Posterior vena cava (tissue), 2 donors: ENCODE measurements at regions of chr1 and their contacts with region 1.

Region 1: DNA sequence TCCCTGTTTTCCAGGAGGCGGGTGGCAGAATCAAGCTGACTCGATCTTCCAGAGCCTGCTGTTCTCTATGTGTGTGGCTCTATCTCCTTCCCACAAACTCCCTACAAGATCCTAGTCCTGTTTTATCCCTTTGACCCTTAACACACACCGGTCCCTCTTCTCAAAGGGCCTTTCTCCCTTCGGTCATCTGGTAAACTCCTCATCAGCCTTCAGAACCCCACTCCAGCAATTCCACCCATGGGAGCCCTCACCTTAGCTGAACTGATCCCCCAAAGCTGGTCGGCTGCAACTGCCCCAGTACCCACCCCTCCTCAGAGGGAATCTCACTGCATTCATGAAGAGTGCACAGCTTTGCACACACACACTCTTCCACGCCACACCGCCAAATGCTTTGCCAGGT is 184.9 kb downstream of the IGSF21 start:
- DNase-seq: no peak

Region 2: DNA sequence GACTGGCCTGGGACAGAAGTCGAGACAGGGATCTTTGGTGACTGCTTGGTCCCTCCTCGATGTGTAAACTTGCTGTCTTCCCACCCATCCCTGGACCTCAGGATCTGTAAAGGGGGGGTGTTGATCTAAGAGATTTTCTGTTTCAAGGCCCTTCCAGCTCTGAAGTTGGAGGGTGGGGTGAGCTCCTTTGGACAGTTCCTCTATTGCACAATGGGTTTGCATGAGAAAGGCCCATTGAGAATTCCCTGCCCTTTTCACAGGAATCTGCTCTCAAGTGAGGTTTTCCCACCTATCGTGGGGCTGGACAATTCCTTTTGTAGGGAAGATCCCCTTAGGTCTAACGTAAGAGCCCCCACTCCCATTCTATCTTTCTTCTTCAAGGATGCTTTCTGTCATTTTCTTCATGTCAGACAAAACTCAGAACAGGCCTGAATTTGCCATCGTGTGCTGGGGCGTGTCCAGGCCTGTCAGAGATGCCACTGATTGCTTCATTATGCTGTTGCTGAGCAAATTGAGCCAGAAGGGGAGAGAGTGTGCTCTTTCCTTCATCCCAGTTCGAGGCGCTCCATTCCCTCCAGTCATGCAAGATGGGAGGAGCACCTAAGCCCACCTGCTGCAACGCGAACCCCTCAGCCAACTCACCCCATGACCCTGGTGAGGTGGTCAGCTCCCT is 334.8 kb before region 1 on chr1:
- intact Hi-C with region 1: no loop called
- DNase-seq: peak; percentile 55

Region 3: DNA sequence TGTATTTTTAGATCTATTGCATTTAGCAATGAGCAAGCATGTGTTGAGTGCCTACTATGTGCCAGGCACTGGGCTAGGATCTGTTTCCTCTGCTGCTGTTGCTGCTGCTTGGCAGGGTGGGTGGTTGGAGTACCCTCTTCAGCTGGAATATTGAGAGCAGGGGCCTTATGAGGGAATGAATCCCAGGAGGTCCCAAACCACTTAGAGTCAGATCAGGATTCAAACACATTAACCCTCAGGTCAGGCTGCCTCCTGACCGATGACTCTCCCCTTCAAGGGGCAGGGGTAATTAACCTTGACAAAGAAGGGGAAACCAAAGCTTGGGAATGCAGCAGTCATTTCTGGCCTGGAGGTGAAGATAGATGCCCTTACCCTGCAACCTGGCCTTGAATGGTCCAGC is 46.9 kb before region 1 on chr1:
- intact Hi-C with region 1: loop called in 1 of 2 experiments (anchors 1 kb)
- DNase-seq: no peak

Region 4: DNA sequence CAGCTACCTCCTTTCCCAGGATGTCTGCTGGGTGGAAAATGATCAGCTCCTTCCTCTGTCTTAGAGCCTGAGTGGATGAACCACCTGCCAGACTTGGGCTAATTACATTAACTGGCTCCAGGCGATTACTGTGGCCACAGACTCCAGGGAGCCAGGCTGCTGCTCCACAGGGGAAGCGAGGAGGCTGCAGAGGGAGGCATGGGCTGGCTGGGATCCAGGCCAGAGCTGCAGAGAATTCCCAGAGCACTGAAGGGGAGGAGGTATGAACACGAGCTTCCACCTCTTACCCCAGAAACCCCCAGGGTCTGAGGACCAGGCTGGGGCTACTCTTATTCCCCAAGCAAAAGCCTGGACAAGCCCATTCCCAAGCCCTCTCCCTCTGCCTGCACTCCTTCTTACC is 52.2 kb after region 1 on chr1:
- intact Hi-C with region 1: no loop called
- DNase-seq: no peak